Calu3 (cell line): ENCODE measurements at regions of chr10 and their contacts with region 1.

Region 1: DNA sequence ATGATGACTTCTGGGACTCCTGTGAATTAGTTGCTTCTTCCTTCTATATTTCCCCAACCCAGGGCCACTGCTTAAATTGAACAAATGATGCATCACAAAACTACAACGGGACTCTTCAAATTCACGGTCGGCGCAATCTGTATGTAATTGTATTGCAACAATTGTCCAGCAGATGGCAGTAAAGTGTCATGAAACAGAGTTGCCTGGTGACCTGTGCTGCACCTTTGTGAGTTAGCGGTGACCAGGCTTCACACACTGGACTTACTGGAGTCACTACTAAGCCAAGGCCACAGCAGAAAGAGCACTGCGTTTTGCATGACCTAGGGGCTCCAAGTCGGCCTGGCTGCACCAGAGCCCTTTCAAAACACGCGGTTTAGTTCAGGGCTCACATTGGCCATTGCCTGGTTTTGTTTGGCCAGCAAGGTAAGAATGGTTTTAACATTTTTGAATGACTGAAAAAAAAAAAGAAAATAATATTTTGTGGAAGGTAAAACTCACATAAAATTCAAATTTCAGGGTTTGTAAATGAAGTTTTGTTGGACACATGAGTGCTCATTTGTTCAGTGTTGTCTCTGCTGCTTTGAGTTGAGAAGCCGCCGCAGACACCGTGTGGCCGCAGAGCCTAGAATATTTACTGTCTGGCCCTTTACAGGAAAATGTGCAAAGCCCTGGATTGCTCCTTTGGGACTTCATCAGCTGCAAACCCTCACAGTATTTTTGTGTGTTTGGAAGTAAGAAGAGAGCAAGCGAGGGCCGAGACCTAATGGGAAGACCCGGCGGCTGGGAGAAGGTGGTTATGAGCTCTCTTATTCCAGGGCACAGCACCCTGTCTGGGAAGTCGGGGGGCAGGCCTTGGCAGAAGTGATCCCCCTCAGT is 23.2 kb upstream of the ZNF32 start:
- DNase-seq: peak; percentile 62
- H3K4me3 Mint-ChIP-seq: no peak overlapping the region
- H3K27ac Mint-ChIP-seq: no peak overlapping the region
- H3K4me1 Mint-ChIP-seq: no peaks in the 10 kb centered on the region
- H3K27me3 Mint-ChIP-seq: peaks cover 56% of the 10 kb centered on the region
- CTCF ChIP-seq: peak; percentile 71

Region 2: GRCh38 chr10:43754569-43755260 is 82.8 kb after region 1 on chr10:
- CTCF ChIA-PET with region 1: no interaction called
- intact Hi-C with region 1: no loop called
- DNase-seq: no peak
- H3K4me3 Mint-ChIP-seq: no peak overlapping the region
- H3K27ac Mint-ChIP-seq: no peak overlapping the region
- H3K4me1 Mint-ChIP-seq: no peaks in the 10 kb centered on the region
- H3K27me3 Mint-ChIP-seq: peaks cover 5% of the 10 kb centered on the region
- CTCF ChIP-seq: no peak

Region 3: DNA sequence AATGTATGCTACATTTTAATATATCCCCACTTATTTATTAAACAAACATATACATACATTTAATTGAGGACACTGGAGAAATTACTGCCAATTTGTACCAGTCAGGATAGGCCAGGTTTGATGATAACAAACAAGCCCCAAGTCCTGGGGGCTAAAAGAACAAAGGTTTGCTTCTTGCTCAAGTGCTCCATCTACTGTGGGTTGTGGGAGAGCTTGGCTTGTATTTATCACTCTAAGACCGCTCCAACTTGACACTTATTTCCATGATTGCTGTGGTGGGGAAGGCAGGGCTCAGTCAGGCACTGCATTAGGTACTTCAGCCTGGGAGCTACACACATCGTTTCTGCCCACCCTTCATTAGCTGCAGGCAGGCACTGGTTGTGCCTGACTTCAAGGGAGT is 113.4 kb after region 1 on chr10:
- CTCF ChIA-PET with region 1: no interaction called
- intact Hi-C with region 1: loop called (anchors 2 kb)
- DNase-seq: no peak
- H3K4me3 Mint-ChIP-seq: no peak overlapping the region
- H3K27ac Mint-ChIP-seq: no peak overlapping the region
- H3K4me1 Mint-ChIP-seq: no peaks in the 10 kb centered on the region
- H3K27me3 Mint-ChIP-seq: peaks cover 17% of the 10 kb centered on the region
- CTCF ChIP-seq: no peak

Region 4: GRCh38 chr10:43816351-43817321 is 144.7 kb after region 1 on chr10:
- CTCF ChIA-PET with region 1: no interaction called
- intact Hi-C with region 1: no loop called
- DNase-seq: no peak
- H3K4me3 Mint-ChIP-seq: no peak overlapping the region
- H3K27ac Mint-ChIP-seq: no peak overlapping the region
- H3K4me1 Mint-ChIP-seq: no peaks in the 10 kb centered on the region
- H3K27me3 Mint-ChIP-seq: no peaks in the 10 kb centered on the region
- CTCF ChIP-seq: no peak

Region 5: DNA sequence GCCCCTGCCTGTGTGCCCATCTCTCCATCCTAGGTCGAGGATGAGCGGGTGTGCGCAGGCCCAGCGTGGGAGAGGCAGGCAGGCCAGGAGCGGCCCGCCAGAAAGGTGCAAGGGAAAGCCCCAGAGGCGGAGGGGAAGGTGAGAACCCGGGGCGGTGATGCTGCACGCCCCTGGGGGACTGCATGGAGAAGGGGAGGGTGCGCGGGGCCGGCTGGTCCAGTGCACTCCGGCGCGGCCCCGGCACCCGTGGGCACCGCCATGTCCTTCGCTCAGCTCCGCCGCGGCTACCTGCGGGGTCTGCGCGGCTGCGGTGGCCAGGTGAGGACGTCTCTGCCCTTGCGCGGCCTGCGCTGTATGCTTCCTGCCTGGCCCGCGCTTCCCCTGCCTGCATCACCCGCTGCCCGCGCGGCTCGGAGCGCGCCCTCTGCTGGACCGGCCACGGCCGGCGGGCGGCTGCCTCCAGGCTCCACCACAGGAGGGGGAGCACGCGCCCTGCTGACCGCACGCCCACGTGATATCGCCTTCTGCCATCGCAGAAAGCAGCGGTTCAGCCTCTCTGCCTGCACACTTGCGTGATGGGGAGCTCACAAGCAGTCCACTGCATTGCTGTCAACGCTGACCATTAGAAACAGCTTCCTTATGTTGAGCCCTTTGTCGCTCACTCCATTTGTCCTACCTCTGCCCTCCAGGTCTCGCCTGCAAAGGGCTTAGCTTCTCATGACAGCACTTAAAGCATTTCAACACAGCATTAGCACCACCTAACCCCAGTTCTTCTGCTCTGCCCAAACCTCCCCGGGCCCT is 639.1 kb after region 1 on chr10:
- CTCF ChIA-PET with region 1: no interaction called
- intact Hi-C with region 1: loop called (anchors 5 kb)
- DNase-seq: peak; percentile 78
- H3K4me3 Mint-ChIP-seq: no peak overlapping the region
- H3K27ac Mint-ChIP-seq: no peak overlapping the region
- H3K4me1 Mint-ChIP-seq: no peaks in the 10 kb centered on the region
- H3K27me3 Mint-ChIP-seq: no peaks in the 10 kb centered on the region
- CTCF ChIP-seq: peak; percentile 55

Region 6: DNA sequence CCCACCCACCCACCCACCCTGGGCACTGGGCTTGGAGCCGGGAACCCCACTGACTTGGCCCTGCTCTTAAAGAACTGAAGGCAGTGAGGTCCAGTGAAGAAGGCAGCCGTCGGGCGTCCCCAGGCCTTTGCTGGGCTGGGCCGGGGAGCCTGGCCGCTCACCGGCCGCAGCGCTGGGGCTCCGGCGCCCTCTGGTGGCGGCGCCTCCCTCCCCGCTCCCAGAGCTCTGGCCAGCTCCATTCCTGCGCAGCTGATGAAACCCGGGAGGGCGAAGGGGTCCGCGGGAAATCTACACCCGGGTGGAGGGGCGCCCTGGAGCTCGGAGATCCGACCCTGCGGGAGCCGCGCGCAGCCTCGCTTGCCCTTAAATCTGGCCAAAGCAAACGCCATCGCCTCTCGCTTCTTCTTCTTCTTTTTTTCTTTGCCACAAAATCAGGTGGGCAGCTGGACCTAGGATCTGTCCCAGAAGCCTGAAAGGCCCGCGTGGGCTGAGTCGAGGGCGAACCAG is 714.7 kb after region 1 on chr10:
- CTCF ChIA-PET with region 1: interaction called, 3 read pairs
- intact Hi-C with region 1: loop called (anchors 2 kb)
- DNase-seq: peak; percentile 73
- H3K4me3 Mint-ChIP-seq: no peak overlapping the region
- H3K27ac Mint-ChIP-seq: no peak overlapping the region
- H3K4me1 Mint-ChIP-seq: no peaks in the 10 kb centered on the region
- H3K27me3 Mint-ChIP-seq: peaks cover 48% of the 10 kb centered on the region
- CTCF ChIP-seq: peak; percentile 58